Right ventricle myocardium inferior (tissue), 1 donor: ENCODE measurements at regions of chr2 and their contacts with region 1.

Region 1: DNA sequence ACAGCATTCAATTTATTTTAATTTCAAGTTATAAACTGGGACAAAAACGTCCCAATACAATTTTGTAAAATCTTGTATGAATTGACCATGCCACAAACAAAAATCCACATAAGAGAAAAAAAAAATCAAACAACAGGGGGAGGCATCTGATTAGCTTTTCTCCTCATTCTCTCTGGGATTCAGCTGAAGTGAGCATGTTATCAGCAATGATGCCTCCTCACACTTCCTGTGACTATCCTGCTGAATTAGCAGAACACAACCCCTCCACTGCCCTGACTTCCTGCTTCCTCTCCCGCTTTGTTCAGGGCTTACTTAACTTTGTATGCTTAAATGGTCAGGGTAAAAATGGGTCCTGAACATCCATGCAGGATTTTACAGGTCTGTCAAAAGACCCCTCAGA is 132.2 kb upstream of the ITGB6 start:
- DNase-seq: no peak
- ATAC-seq: peak; percentile 50

Region 2: GRCh38 chr2:160371251-160372009 is 39.1 kb after region 1 on chr2:
- intact Hi-C with region 1: loop called (anchors 2 kb)
- DNase-seq: peak; percentile 60
- ATAC-seq: peak; percentile 20

Region 3: GRCh38 chr2:160406591-160407392 is 74.5 kb after region 1 on chr2:
- intact Hi-C with region 1: loop called (anchors 5 kb)
- DNase-seq: peak; percentile 86
- ATAC-seq: peak; percentile 49

Region 4: DNA sequence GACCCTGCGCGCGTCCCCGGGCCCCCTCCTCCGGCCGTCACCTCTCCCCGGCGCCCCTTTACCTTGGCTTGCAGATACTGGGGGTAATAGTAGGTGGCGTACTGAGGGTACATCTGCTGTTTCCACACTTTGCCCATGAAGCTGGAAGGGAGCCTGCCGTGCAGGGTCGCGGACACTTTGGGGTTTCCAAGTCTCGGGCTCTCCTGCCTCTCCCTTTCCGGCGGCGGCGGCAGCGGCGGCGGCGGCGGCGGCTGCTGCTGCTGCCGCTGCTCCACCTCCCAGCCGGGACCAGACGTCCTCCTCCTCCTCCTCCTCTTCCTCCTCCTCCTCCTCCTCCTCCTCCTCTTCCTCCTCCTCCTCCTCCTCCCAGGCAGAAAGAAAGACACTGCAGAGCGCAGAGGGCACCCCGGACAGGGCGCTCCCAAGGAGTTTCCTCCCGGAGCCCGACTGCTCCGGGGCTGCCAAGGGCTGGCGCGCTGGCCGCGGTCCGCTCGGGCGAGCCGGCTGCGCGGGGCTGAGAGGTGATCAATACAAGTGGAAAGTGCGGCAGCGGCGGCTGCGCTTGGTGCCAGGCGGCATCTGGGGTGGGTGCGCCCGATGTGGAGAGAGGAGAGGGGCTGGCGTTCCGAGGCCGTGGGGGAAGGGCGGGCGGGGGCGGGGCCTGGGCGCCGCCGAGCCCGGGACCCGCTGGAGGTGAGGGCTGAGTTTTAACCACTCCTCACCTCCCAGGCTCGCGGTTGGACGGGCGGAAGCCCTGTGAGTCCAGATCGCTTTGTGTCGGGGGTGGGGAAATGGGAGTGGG is 161.1 kb after region 1 on chr2 and contains the start of gene RBMS1:
- intact Hi-C with region 1: loop called (anchors 5 kb)
- DNase-seq: peak; percentile 90
- ATAC-seq: peak; percentile 79
- total RNA-seq, gene RBMS1: 58.2 TPM

Region 5: DNA sequence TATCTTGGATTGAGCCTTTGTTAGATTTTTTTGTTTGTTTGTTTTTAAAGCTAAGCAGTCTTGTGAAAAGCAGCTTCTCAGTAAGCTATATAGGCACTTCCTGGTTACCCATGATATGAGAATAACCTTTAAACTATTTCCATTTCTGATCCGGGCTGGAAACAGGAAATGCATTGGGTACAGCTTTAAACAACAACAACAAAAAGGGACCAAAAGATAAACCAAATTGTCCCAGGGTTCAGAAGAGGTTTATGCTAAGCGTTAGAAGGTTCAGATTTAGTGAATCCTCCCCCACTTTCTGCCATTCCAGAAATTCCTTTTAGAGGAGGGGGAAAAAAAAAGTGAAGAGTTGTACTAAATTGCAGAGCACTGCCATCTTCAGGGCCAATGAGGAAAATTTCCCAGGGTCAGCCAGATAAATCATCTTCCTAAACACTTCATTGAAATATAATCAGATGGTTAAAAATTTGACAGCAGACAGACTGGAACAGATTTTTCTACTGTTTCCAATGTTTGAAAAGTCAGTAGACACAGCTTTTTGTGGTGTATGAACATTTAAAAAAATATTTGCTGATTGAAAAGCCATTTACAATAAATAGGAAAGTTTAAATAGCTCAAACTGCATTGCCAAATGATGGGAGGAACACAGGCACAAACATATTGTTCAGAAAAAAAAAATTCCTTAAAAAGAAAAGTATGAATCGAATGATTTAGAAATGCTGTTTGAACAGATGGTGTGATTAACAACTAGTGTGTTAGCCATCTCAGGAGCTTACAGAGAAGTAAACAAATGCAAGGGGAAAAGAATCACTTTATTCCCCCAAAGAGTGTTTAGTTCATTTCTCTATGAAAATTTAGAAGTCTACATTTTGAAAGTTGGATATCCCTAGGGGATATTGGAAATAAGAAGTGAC is 638.0 kb after region 1 on chr2:
- intact Hi-C with region 1: loop called (anchors 5 kb)
- DNase-seq: peak; percentile 34
- ATAC-seq: peak; percentile 60